GM12878 (cell line): ENCODE measurements at regions of chr16 and their contacts with region 1.

Region 1: GRCh38 chr16:72467157-72467759 is 295.3 kb upstream of the PMFBP1 start:
- DNase-seq: no peak
- ATAC-seq: peak; percentile 84
- H3K4me3 ChIP-seq: no peak overlapping the region
- H3K27ac ChIP-seq: no peak overlapping the region
- H3K4me1 ChIP-seq: no peaks in the 10 kb centered on the region
- H3K27me3 ChIP-seq: no peaks in the 10 kb centered on the region
- CTCF ChIP-seq: peak; percentile 49 to 67 (median 58); a peak in 5 of 6 replicates
- EP300 ChIP-seq: no peak
- POLR2A ChIP-seq: no peak
- RAD21 ChIP-seq: peak; percentile 79

Region 2: DNA sequence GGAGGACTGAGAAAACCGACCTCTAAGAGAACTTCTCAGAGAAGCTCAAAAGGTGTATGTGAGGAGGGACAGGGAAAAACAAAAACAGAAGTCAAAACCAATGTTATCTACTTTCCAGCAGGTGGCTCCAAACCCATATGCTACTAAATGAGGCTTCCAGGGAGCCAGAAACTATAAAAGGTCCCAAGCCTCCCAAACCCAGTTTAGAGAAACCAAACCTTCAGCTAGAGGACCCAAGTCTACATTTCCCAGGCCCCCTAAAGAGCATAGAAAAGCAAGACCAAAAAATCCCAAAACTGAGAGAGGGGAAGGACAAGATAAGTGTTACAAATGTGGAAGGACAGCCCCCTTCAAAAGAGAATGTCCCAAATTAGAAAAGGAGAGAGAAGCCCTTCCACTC is 400.5 kb before region 1 on chr16:
- CTCF ChIA-PET with region 1: no interaction called
- POLR2A ChIA-PET with region 1: no interaction called
- RAD21 ChIA-PET with region 1: no interaction called
- SMC1A ChIA-PET with region 1: no interaction called
- in situ Hi-C with region 1: no loop called
- intact Hi-C with region 1: loop called (anchors 5 kb)
- DNase-seq: no peak
- ATAC-seq: peak; percentile 84
- H3K4me3 ChIP-seq: no peak overlapping the region
- H3K27ac ChIP-seq: no peak overlapping the region
- H3K4me1 ChIP-seq: no peaks in the 10 kb centered on the region
- H3K27me3 ChIP-seq: no peaks in the 10 kb centered on the region
- CTCF ChIP-seq: peak; percentile 55 to 57 (median 56)
- EP300 ChIP-seq: no peak
- POLR2A ChIP-seq: no peak
- RAD21 ChIP-seq: peak; percentile 67

Region 3: DNA sequence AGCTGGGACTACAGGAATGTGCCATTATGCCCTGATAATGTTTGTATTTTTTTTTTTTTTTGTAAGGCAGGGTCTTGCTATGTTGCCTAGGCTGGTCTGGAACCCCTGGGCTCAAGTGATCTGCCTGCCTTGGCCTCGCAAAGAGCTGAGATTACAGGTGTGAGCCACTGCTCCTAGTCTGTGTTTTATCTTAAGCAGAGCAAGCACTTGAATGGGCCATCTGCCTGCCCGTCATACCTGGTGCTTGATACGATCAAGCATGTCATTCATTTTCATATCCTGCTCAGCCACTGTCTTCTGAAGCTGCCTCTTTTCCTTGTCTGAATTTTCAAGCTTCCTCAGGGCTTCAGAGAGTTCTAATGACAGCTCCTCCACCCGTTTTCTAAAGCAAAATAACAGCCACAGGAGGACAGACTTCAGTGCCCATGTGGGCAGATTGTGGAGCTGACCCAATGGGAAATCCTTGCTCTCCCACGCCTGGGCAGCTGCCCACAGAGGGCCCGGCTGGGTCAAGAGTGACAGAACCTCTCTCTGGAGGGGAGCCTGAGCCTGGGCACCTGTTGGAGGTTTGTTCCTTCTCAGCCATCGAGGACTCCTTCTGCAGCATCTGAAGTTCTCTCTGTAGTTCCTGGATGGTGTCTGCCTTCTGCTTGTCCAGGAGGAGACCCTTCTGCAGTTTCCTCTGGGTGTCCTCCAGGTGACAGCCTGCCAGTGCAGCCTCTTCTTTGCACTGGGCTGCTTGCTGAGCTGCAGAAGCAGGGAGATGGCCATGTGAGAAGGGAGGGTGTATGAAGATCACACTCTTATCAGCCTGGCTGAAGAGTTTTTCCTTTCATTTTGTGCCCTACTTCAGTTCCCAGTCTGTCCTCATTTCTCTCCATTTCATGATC is 337.0 kb before region 1 on chr16:
- CTCF ChIA-PET with region 1: interaction called, 92 read pairs
- POLR2A ChIA-PET with region 1: no interaction called
- RAD21 ChIA-PET with region 1: interaction called, 24 read pairs
- SMC1A ChIA-PET with region 1: interaction called, 38 read pairs
- in situ Hi-C with region 1: no loop called
- intact Hi-C with region 1: loop called (anchors 1 kb)
- DNase-seq: no peak
- ATAC-seq: no peak
- H3K4me3 ChIP-seq: no peak overlapping the region
- H3K27ac ChIP-seq: no peak overlapping the region
- H3K4me1 ChIP-seq: no peaks in the 10 kb centered on the region
- H3K27me3 ChIP-seq: no peaks in the 10 kb centered on the region
- CTCF ChIP-seq: no peak
- EP300 ChIP-seq: no peak
- POLR2A ChIP-seq: no peak
- RAD21 ChIP-seq: no peak

Region 4: DNA sequence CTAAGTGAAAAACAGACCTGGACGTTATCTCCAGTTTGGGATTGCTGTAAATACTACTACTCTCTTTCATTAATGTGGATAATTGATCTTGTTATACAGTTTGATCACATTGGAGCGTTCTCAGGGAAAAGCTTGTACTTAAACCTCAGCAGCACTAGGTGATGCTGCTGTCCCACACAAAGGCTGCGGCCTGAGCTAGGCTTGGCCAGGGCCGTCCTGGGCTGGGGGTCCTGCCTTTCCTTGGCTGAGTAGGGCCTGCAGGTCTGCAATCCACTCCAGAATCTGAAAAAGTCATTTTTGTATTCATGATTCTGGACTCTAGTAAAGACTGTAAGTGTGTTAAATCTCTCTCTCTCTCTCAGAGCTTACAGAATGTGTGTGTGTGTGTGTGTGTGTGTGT is 271.6 kb before region 1 on chr16:
- CTCF ChIA-PET with region 1: interaction called, 10 read pairs
- POLR2A ChIA-PET with region 1: no interaction called
- RAD21 ChIA-PET with region 1: no interaction called
- SMC1A ChIA-PET with region 1: no interaction called
- in situ Hi-C with region 1: no loop called
- intact Hi-C with region 1: no loop called
- DNase-seq: no peak
- ATAC-seq: no peak; the same call in 2 of the 3 replicates
- H3K4me3 ChIP-seq: no peak overlapping the region
- H3K27ac ChIP-seq: no peak overlapping the region
- H3K4me1 ChIP-seq: no peaks in the 10 kb centered on the region
- H3K27me3 ChIP-seq: no peaks in the 10 kb centered on the region
- CTCF ChIP-seq: peak in 1 of 3 experiments; percentile 5; a peak in 1 of 6 replicates
- EP300 ChIP-seq: no peak
- POLR2A ChIP-seq: no peak
- RAD21 ChIP-seq: no peak

Region 5: DNA sequence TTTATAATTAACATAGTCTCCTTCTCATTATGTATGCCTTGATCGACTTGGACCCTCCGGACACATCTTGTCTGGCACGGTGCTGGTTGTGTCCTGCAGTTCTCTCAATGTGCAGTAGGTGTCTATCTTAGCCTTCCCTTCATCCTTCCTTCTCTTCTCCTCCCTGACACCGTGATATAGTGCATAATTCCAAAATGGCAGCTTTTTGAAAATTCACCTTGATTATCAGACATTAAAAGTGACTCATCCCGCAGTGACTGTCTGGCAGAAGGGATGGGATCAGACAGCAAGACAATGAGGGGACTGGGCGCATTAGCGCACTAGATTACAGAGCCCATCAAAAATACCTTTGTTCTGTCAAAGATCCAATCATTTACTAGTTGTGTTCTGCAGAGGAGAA is 225.3 kb before region 1 on chr16:
- CTCF ChIA-PET with region 1: no interaction called
- POLR2A ChIA-PET with region 1: no interaction called
- RAD21 ChIA-PET with region 1: no interaction called
- SMC1A ChIA-PET with region 1: interaction called, 3 read pairs
- in situ Hi-C with region 1: no loop called
- intact Hi-C with region 1: loop called (anchors 1 kb)
- DNase-seq: no peak
- ATAC-seq: peak; percentile 65
- H3K4me3 ChIP-seq: no peak overlapping the region
- H3K27ac ChIP-seq: no peak overlapping the region
- H3K4me1 ChIP-seq: peaks cover 7% of the 10 kb centered on the region
- H3K27me3 ChIP-seq: no peaks in the 10 kb centered on the region
- CTCF ChIP-seq: peak; percentile 36 to 54 (median 41); a peak in 5 of 6 replicates
- EP300 ChIP-seq: no peak
- POLR2A ChIP-seq: no peak
- RAD21 ChIP-seq: peak; percentile 57

Region 6: GRCh38 chr16:72389791-72390190 is 77.5 kb before region 1 on chr16:
- CTCF ChIA-PET with region 1: no interaction called
- POLR2A ChIA-PET with region 1: no interaction called
- RAD21 ChIA-PET with region 1: no interaction called
- SMC1A ChIA-PET with region 1: no interaction called
- in situ Hi-C with region 1: no loop called
- intact Hi-C with region 1: no loop called
- DNase-seq: no peak
- ATAC-seq: no peak
- H3K4me3 ChIP-seq: no peak overlapping the region
- H3K27ac ChIP-seq: no peak overlapping the region
- H3K4me1 ChIP-seq: no peaks in the 10 kb centered on the region
- H3K27me3 ChIP-seq: no peaks in the 10 kb centered on the region
- CTCF ChIP-seq: no peak
- EP300 ChIP-seq: no peak
- POLR2A ChIP-seq: no peak
- RAD21 ChIP-seq: no peak

Region 7: DNA sequence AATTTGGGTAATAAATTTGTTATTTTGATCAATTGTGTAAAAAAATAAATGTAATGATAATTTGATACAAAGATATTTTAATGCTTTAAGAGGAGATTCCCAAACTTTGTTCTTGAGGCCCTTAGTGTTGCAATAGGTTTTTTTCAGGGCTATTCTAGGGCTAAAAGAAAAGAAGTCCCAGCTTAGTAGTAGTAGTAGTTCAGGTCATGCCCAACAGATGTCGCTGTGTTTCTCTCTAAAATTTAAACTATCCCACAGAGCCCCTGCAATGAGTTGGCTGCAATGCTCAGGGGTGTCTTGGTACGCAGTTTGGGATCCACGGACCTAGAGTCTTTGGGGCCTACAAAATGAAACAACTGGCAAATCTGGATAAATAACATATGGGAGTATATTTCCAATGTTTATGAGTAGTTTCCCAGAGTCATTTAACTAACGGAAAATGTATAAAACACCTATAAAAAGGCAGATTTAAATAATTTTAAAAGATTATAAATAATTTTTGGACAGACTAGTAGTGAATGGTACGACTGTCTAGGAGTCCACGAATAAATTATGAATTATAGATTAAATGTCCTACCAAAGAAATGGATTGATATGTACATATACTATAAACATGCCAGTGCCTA is 66.9 kb before region 1 on chr16:
- CTCF ChIA-PET with region 1: interaction called, 42 read pairs
- POLR2A ChIA-PET with region 1: no interaction called
- RAD21 ChIA-PET with region 1: interaction called, 11 read pairs
- SMC1A ChIA-PET with region 1: interaction called, 4 read pairs
- in situ Hi-C with region 1: no loop called
- intact Hi-C with region 1: loop called (anchors 5 kb)
- DNase-seq: peak; percentile 7
- ATAC-seq: peak; percentile 88
- H3K4me3 ChIP-seq: no peak overlapping the region
- H3K27ac ChIP-seq: no peak overlapping the region
- H3K4me1 ChIP-seq: no peaks in the 10 kb centered on the region
- H3K27me3 ChIP-seq: no peaks in the 10 kb centered on the region
- CTCF ChIP-seq: peak; percentile 57 to 75 (median 67)
- EP300 ChIP-seq: no peak
- POLR2A ChIP-seq: no peak
- RAD21 ChIP-seq: peak; percentile 54; the same call in 1 of the 2 replicates

Region 8: GRCh38 chr16:72434159-72434558 is 33.1 kb before region 1 on chr16:
- CTCF ChIA-PET with region 1: no interaction called
- POLR2A ChIA-PET with region 1: no interaction called
- RAD21 ChIA-PET with region 1: no interaction called
- SMC1A ChIA-PET with region 1: no interaction called
- in situ Hi-C with region 1: no loop called
- intact Hi-C with region 1: no loop called
- DNase-seq: no peak
- ATAC-seq: no peak
- H3K4me3 ChIP-seq: no peak overlapping the region
- H3K27ac ChIP-seq: no peak overlapping the region
- H3K4me1 ChIP-seq: no peaks in the 10 kb centered on the region
- H3K27me3 ChIP-seq: no peaks in the 10 kb centered on the region
- CTCF ChIP-seq: no peak
- EP300 ChIP-seq: no peak
- POLR2A ChIP-seq: no peak
- RAD21 ChIP-seq: no peak

Region 9: DNA sequence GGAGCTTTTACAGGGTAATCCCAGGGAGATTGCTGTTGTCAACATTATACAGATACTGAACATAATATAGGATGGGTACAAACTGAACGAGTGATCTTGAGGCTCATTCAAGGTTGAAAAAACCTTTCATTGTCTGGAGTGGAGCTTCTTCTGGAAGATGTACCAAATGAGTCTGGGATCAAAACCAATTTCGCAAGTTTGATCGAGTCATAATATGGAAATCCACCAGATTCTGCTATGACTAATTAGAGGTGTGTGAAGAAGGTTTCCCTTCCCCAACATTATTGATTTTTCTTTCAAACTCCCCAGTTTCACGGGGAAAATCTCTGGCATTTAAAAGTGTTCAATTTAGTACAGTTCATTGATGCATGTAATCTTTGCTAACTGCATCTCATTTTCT is 256.5 kb after region 1 on chr16:
- CTCF ChIA-PET with region 1: no interaction called
- POLR2A ChIA-PET with region 1: no interaction called
- RAD21 ChIA-PET with region 1: no interaction called
- SMC1A ChIA-PET with region 1: no interaction called
- in situ Hi-C with region 1: no loop called
- intact Hi-C with region 1: no loop called
- DNase-seq: no peak
- ATAC-seq: no peak
- H3K4me3 ChIP-seq: no peak overlapping the region
- H3K27ac ChIP-seq: no peak overlapping the region
- H3K4me1 ChIP-seq: no peaks in the 10 kb centered on the region
- H3K27me3 ChIP-seq: no peaks in the 10 kb centered on the region
- CTCF ChIP-seq: no peak
- EP300 ChIP-seq: no peak
- POLR2A ChIP-seq: no peak
- RAD21 ChIP-seq: no peak

Region 10: GRCh38 chr16:73601911-73602310 is 1134.7 kb after region 1 on chr16:
- CTCF ChIA-PET with region 1: no interaction called
- POLR2A ChIA-PET with region 1: no interaction called
- RAD21 ChIA-PET with region 1: no interaction called
- SMC1A ChIA-PET with region 1: no interaction called
- in situ Hi-C with region 1: no loop called
- intact Hi-C with region 1: no loop called
- DNase-seq: peak; percentile 19
- ATAC-seq: peak; percentile 87
- H3K4me3 ChIP-seq: no peak overlapping the region
- H3K27ac ChIP-seq: peak overlapping the region; percentile 50
- H3K4me1 ChIP-seq: no peaks in the 10 kb centered on the region; the same call in 1 of the 2 replicates
- H3K27me3 ChIP-seq: no peaks in the 10 kb centered on the region
- CTCF ChIP-seq: no peak
- EP300 ChIP-seq: no peak
- POLR2A ChIP-seq: no peak
- RAD21 ChIP-seq: no peak